Endothelial cell of umbilical vein (primary cell): ENCODE measurements at regions of chr5 and their contacts with region 1.

Region 1: GRCh38 chr5:176447982-176448608 is at the start of gene FAF2:
- DNase-seq: peak; percentile 99
- H3K4me3 ChIP-seq: peak within 1 kb of the TSS; percentile 75 to 99 (median 90)
- H3K27ac ChIP-seq: peak within 1 kb of the TSS; percentile 98
- H3K4me1 ChIP-seq: peaks cover 14% of the 10 kb centered on the region
- H3K27me3 ChIP-seq: no peaks in the 10 kb centered on the region
- CTCF ChIP-seq: peak; percentile 96 to 100
- POLR2A ChIP-seq: peak; percentile 94
- total RNA-seq, gene FAF2: 43.5 and 50.1 TPM in 2 replicates

Region 2: DNA sequence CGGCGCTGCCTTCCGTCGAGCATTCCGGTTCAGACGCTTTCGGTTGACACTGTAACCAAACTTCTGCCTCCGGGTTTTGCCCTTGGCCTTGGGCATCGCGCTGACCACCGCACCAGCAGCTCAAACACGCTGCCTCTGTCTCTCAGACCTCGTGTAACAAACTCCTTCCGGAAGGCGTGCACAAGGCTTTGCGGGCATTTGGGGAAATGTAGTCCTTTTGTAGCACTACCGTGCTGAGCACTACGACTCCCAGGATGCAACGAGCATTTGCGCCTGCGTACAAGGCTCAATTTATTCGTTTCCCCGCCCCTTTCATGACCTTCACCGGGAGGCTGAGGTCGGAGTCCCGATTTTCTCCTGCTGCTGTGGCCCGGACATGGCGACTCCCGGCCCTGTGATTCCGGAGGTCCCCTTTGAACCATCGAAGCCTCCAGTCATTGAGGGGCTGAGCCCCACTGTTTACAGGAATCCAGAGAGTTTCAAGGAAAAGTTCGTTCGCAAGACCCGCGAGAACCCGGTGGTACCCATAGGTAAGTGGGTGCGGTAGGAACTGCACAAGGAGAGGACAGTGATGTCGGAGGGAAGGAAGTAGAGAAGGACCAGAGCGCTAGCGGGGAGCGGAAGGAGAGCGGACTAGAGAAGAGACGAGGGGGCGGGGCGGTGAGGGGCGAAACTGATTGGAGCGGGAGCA is 59.5 kb before region 1 on chr5 and contains the starts of genes HIGD2A and NOP16:
- CTCF ChIA-PET with region 1: no interaction called
- POLR2A ChIA-PET with region 1: no interaction called
- dilution Hi-C with region 1: no loop called
- intact Hi-C with region 1: loop called (anchors 1 kb)
- DNase-seq: peak; percentile 98
- H3K4me3 ChIP-seq: peak within 1 kb of the TSS; percentile 64 to 85 (median 65)
- H3K27ac ChIP-seq: peak within 1 kb of the TSS; percentile 79
- H3K4me1 ChIP-seq: peaks cover 14% of the 10 kb centered on the region
- H3K27me3 ChIP-seq: no peaks in the 10 kb centered on the region
- CTCF ChIP-seq: no peak
- POLR2A ChIP-seq: peak; percentile 74
- total RNA-seq, gene HIGD2A: 96.2 and 103 TPM in 2 replicates
- total RNA-seq, gene NOP16: 47.4 and 51.6 TPM in 2 replicates

Region 3: DNA sequence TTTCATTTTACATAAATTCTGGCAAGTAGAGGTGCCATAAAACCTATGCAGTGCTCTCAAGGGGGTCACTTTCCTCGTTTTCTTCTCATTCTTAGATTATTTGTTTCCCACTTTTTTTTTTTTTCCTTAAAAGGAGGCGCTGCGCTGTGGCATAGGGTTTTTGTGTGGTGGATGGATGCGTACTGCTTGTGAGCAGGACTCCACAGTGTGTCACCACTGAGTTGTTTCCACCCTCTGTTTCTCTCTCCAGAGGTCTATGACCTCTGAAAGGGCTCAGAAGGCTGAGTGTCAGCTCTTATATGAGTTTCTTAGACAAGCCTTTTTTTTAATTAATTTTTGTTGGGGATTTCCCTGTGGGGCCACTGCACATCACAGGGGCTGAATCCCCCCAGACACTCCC is 18.1 kb before region 1 on chr5:
- CTCF ChIA-PET with region 1: interaction called, 11 read pairs
- POLR2A ChIA-PET with region 1: interaction called, 3 read pairs
- dilution Hi-C with region 1: no loop called
- intact Hi-C with region 1: no loop called
- DNase-seq: no peak
- H3K4me3 ChIP-seq: no peak overlapping the region
- H3K27ac ChIP-seq: no peak overlapping the region
- H3K4me1 ChIP-seq: peaks cover 11% of the 10 kb centered on the region
- H3K27me3 ChIP-seq: no peaks in the 10 kb centered on the region
- CTCF ChIP-seq: no peak
- POLR2A ChIP-seq: no peak

Region 4: GRCh38 chr5:176537608-176538504 is 89.8 kb after region 1 on chr5:
- CTCF ChIA-PET with region 1: interaction called, 27 read pairs
- POLR2A ChIA-PET with region 1: interaction called, 4 read pairs
- dilution Hi-C with region 1: no loop called
- intact Hi-C with region 1: loop called (anchors 1 kb)
- DNase-seq: peak; percentile 99
- H3K4me3 ChIP-seq: peak overlapping the region; percentile 68 to 79 (median 79)
- H3K27ac ChIP-seq: peak overlapping the region; percentile 83
- H3K4me1 ChIP-seq: peaks cover 59% of the 10 kb centered on the region
- H3K27me3 ChIP-seq: no peaks in the 10 kb centered on the region
- CTCF ChIP-seq: no peak
- POLR2A ChIP-seq: no peak

Region 5: DNA sequence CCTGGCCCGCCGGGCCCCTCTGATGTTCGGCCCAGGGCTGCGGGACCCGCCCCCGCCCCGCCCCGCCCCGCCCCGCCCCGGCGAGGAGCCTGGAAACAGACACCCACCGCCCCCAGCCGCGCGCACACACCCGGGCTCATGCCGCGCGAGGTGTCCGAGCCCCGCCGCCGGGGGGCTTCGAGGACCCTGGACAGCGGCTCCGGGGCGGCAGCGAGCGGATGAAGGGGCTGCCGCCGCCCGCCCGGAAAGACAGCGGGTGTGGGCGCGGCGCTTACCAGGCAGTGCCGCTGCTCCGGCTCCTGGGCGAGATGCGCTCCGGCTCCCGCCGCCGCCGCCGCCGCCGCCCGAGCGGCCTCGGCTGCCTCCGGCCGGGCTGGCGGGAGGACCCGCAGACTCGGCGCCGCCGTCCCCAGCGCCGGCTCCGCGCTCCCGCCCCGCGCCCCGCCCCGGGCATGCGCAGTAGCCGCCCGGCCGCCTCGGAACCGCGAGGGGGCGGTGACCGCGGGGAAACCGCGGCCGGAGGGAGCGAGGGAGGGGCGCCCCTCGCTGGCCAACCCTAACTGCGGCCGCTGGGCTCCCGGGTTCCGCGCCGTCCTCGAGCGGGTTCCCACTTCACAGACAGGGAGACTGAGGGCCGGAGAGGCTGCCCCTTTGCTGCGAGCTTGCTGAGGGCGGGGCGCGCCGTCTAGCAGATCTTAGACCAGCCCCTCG is 161.8 kb after region 1 on chr5 and contains the start of gene GPRIN1:
- CTCF ChIA-PET with region 1: no interaction called
- POLR2A ChIA-PET with region 1: interaction called, 5 read pairs
- dilution Hi-C with region 1: no loop called
- intact Hi-C with region 1: loop called (anchors 10 kb)
- DNase-seq: peak; percentile 59
- H3K4me3 ChIP-seq: peak within 1 kb of the TSS; percentile 18 to 63 (median 47)
- H3K27ac ChIP-seq: no peak within 1 kb of the TSS
- H3K4me1 ChIP-seq: peaks cover 6% of the 10 kb centered on the region
- H3K27me3 ChIP-seq: no peaks in the 10 kb centered on the region
- CTCF ChIP-seq: peak; percentile 20 to 35
- POLR2A ChIP-seq: no peak
- total RNA-seq, gene GPRIN1: 9.3 and 10.4 TPM in 2 replicates